ENCODE measurements at regions of chr1 and their contacts with region 1.

Region 1: DNA sequence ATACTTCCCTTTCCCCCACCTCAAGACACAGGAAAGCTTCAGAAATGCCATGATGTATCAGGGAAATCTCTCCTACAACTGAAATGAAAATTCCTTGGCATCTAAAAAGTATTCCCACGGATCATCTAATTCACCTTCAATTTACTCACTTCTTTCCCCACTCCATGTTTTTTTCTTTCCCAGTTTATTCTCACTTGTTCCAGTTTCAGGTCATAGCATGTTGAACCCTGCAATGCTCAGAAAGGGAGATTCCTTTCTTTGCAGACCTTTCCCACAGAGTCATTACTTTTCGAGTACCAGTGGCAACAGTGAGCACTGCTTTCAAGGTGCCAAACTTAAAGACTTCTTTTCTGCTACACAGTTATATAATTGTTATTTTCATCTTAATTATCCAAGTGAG is 305.0 kb downstream of the VAV3 start:
- DNase-seq: no peak
- H3K4me3 ChIP-seq: no peak overlapping the region
- H3K27ac ChIP-seq: peak overlapping the region in 1 of 4 donors; percentile 19
- H3K4me1 ChIP-seq: peaks cover 0 to 11% (median 10%) of the 10 kb centered on the region in 4 donors
- H3K27me3 ChIP-seq: no peaks in the 10 kb centered on the region
- CTCF ChIP-seq: no peak
- EP300 ChIP-seq: no peak
- POLR2A ChIP-seq: no peak

Region 2: DNA sequence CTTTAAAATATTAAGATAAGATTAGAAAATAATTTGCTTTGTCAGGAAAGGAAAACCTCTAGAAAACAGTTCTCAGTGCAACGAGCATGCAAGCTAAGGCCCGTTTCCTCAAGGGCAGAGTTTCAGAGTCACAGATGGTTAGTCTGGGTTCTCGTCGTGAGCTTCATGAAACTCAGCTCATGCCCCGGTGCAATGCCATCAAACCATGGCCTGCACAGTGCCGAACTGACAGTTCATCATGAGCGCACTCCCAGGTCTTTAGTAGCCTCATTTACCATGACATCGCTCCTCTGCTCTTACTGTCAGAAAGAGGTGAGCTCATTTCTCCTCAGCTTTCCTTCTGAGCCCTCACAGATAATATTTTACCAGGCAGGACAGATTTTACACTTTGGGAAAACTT is 199.9 kb before region 1 on chr1:
- intact Hi-C with region 1: no loop called
- DNase-seq: no peak
- H3K4me3 ChIP-seq: no peak overlapping the region
- H3K27ac ChIP-seq: no peak overlapping the region
- H3K4me1 ChIP-seq: no peaks in the 10 kb centered on the region
- H3K27me3 ChIP-seq: no peaks in the 10 kb centered on the region
- CTCF ChIP-seq: no peak
- EP300 ChIP-seq: no peak
- POLR2A ChIP-seq: no peak

Region 3: DNA sequence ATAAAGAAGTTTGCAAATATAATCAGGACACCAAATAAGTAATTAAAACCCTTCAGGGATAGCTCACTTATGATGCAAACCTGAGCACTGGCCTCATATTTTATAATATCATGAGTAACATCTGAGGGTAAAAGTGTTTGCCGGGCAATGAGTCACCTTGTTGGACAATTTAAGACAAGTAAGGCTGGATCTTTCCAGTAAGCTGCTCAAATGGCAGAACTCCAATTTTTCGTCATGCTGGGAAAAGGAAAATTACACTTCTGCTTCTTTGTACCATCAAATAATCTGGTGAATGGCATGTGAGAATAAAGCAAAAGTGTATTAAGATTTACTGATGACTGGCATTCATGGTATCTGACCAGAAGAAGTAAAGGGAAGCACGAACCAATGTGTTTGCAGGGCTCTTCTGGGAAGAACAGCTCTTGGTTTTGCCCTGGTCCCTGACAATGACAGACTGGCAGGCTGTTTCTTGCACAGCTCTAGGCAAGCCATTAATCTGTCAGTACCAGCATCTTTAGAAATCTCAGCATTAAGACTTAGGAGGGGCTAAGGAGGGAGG is 87.2 kb before region 1 on chr1:
- intact Hi-C with region 1: loop called (anchors 5 kb)
- DNase-seq: no peak
- H3K4me3 ChIP-seq: no peak overlapping the region
- H3K27ac ChIP-seq: peak overlapping the region; percentile 44 to 76 (median 64)
- H3K4me1 ChIP-seq: peaks cover 0 to 18% (median 16%) of the 10 kb centered on the region in 4 donors
- H3K27me3 ChIP-seq: no peaks in the 10 kb centered on the region
- CTCF ChIP-seq: no peak
- EP300 ChIP-seq: peak; percentile 70
- POLR2A ChIP-seq: no peak

Region 4: GRCh38 chr1:107622966-107623365 is 37.0 kb before region 1 on chr1:
- intact Hi-C with region 1: no loop called
- DNase-seq: no peak
- H3K4me3 ChIP-seq: no peak overlapping the region
- H3K27ac ChIP-seq: no peak overlapping the region
- H3K4me1 ChIP-seq: peaks cover 0 to 15% (median 7%) of the 10 kb centered on the region in 4 donors
- H3K27me3 ChIP-seq: no peaks in the 10 kb centered on the region
- CTCF ChIP-seq: no peak
- EP300 ChIP-seq: no peak
- POLR2A ChIP-seq: no peak